HEK293T (cell line): ENCODE measurements at regions of chr12 and their contacts with region 1.

Region 1: GRCh38 chr12:6944381-6945186 is 762 bp downstream of the C12orf57 start:
- DNase-seq: peak; percentile 74

Region 2: GRCh38 chr12:6792522-6793201 is 151.9 kb before region 1 on chr12:
- CTCF ChIA-PET with region 1: no interaction called
- POLR2A ChIA-PET with region 1: no interaction called
- DNase-seq: no peak

Region 3: DNA sequence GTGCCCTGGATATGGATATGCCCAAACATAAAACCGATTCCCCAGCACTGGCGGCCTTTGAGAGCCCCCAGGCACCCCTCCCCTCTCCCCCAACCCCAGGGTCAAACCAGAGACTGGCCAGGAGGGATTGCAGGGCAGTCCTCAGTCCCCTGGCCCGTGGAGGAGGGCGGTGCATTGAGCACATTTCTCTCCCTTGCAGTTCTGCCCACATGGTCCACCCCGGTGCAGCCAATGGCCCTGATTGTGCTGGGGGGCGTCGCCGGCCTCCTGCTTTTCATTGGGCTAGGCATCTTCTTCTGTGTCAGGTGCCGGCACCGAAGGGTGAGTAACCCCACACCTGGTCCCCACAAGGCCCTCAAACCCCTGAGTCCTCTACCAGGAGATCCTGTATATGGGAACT is 126.4 kb before region 1 on chr12:
- CTCF ChIA-PET with region 1: no interaction called
- POLR2A ChIA-PET with region 1: no interaction called
- DNase-seq: no peak

Region 4: DNA sequence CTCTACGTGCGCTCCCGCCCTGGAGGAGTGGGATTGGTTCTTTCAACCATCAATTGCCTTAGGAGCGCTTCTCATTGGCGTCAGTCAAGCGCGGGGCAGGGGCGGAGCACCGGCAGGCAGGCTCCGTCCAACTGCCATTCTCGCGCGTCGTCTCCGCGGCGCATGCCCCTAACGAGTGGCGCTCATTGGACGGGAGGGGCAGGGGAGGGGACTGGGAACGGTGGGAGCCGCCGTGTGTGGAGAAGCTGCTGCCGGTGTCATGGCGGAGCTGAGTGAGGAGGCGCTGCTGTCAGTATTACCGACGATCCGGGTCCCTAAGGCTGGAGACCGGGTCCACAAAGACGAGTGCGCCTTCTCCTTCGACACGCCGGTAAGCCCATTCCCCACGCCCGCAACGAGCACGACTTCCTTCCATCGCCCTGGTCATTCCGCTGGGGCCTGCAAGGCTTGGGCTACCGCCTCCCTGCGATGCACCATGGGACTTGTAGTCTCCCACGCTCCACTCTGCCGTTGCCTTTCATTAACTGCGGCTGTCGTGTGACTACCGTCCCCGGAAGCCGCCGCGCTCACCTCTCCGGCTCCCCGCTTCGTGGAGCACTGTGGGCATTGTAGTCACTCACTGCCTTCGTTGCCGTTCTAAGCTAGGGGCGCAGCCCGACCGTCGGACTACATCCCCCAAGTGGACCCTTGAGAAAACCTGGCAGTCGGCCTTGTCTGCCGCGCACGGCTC is 92.5 kb before region 1 on chr12 and contains the start of gene USP5:
- CTCF ChIA-PET with region 1: interaction called, 3 read pairs
- POLR2A ChIA-PET with region 1: interaction called, 39 read pairs
- DNase-seq: peak; percentile 94

Region 5: GRCh38 chr12:6890789-6891645 is 53.6 kb before region 1 on chr12:
- CTCF ChIA-PET with region 1: no interaction called
- POLR2A ChIA-PET with region 1: interaction called, 21 read pairs
- DNase-seq: peak; percentile 97

Region 6: GRCh38 chr12:6921996-6922946 is 22.3 kb before region 1 on chr12:
- CTCF ChIA-PET with region 1: interaction called, 7 read pairs
- POLR2A ChIA-PET with region 1: interaction called, 174 read pairs
- DNase-seq: no peak

Region 7: GRCh38 chr12:6975297-6976027 is 30.9 kb after region 1 on chr12:
- CTCF ChIA-PET with region 1: no interaction called
- POLR2A ChIA-PET with region 1: interaction called, 20 read pairs
- DNase-seq: no peak

Region 8: GRCh38 chr12:7096006-7096950 is 151.7 kb after region 1 on chr12:
- CTCF ChIA-PET with region 1: interaction called, 4 read pairs
- POLR2A ChIA-PET with region 1: interaction called, 13 read pairs
- DNase-seq: no peak